Caco-2 (cell line): ENCODE measurements at regions of chr2 and their contacts with region 1.

Region 1: DNA sequence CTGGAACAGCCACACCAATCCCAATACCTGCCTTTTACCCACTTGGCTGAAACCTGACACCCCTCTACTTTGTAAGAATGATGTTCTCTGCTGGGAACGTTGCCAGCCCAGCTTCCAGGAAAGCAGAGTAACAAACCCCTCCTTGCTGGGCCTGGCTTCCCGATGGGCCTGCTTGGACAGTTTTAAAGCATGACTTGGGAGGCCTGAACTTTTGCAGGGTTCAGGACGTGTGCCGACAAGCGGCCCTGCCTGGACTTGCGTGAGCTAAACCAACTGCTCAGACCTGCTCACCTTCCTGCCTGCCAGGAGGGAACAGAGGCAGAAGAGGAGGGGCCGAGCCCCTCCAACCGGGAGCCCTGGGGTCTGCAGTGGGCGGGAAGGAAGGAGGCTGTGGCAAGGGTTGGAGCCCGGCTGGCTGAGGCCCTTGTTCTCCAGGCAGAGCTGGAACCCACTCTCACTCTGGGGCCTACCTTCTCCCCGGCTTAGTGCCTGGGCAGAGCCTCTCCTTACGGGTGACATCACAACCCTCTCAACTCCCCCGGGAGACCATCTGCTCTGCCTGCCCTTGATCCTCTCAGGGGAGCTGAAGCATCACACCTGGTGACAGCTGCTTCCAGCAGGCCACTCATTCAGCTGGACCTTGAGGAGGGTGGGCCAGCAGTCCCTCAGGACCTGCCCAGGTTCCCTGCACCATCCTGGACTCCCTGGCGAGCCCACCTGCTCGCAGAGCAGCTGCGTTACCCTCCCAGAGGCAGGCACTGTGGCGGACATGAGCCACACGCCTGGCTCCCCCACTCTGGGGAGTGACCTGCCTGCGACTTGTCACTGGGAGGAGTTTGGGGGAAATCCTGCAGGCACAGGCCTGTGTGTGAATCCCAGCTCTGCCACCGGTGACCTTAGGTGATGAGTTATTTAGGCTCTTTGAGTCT is 13.2 kb downstream of the HS6ST1 start:
- DNase-seq: no peak
- H3K4me3 ChIP-seq: no peak overlapping the region
- H3K4me3 Mint-ChIP-seq: no peak overlapping the region
- H3K27ac Mint-ChIP-seq: peak overlapping the region; percentile 36
- H3K4me1 ChIP-seq: peaks cover 13% of the 10 kb centered on the region
- H3K4me1 Mint-ChIP-seq: peaks cover 12% of the 10 kb centered on the region
- H3K27me3 ChIP-seq: no peaks in the 10 kb centered on the region
- H3K27me3 Mint-ChIP-seq: no peaks in the 10 kb centered on the region
- CTCF ChIP-seq: no peak

Region 2: DNA sequence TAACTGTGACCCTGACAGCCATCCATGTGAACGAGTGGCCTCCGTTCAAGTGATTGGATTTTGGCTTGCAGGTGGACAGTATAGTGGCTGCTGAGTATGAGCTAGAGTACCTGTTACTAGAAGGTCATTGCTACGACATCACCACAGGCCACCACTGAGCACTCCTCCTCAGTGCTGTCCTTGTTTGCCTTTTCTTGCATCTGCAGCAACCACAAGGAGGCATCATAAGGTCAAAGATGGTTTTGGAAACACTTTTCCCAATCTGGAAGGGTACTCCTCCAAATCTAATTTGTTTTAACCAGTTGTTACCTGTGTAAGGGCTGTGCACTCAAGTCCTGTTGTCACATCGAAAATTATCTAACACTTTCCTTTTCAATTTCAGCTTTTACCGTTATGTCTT is 133.2 kb before region 1 on chr2:
- CTCF ChIA-PET with region 1: interaction called, 3 read pairs
- POLR2A ChIA-PET with region 1: no interaction called
- intact Hi-C with region 1: loop called (anchors 5 kb)
- DNase-seq: peak in 1 of 2 experiments; percentile 20
- H3K4me3 ChIP-seq: no peak overlapping the region
- H3K4me3 Mint-ChIP-seq: no peak overlapping the region
- H3K27ac Mint-ChIP-seq: no peak overlapping the region
- H3K4me1 ChIP-seq: peaks cover 16% of the 10 kb centered on the region
- H3K4me1 Mint-ChIP-seq: peaks cover 14% of the 10 kb centered on the region
- H3K27me3 ChIP-seq: no peaks in the 10 kb centered on the region
- H3K27me3 Mint-ChIP-seq: no peaks in the 10 kb centered on the region
- CTCF ChIP-seq: peak; percentile 24 to 47

Region 3: DNA sequence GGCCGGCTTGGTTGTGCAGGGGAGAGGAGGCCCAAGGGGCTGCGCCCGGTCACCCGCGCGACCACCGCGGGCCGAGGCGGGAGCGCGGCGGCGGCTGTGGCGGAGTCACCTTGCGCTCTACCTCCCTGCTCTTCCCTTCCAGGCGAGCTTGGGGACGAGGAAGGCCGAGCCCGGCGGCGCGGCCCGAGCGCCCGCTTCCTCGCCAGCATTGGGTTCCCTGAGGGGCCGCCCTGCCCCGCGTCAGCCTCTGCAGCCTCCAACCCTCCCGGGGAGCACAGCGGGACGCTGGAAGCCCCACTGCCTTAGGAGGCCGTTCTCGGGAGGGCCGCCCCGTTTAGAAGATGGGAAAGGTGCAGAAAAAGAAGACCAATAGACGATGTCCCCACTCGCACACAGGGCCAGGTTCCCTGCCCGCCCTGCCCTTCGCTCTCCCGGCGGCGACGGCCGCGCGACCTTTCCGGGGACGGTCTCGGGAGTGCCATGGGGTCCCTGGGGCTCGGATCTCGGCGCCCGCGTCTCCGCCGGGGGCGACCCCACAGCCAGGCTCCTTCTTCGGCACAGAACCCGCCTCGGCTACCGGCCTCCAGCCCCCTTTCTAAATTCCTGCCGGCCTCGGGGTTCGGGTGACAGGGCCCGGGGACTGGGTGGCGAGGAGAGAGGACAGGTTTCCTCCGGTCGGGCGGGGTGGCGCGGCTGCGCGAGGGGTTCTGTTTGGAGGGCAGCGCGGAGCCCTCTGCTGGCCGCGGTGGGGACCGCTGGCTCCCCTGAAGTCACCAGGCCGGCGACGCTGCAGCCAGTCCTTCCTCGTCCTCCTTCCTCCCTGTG is 72.2 kb before region 1 on chr2:
- CTCF ChIA-PET with region 1: no interaction called
- POLR2A ChIA-PET with region 1: no interaction called
- intact Hi-C with region 1: no loop called
- DNase-seq: peak; percentile 88 to 93
- H3K4me3 ChIP-seq: peak overlapping the region; percentile 71
- H3K4me3 Mint-ChIP-seq: peak overlapping the region; percentile 73
- H3K27ac Mint-ChIP-seq: no peak overlapping the region
- H3K4me1 ChIP-seq: no peaks in the 10 kb centered on the region
- H3K4me1 Mint-ChIP-seq: no peaks in the 10 kb centered on the region
- H3K27me3 ChIP-seq: no peaks in the 10 kb centered on the region
- H3K27me3 Mint-ChIP-seq: no peaks in the 10 kb centered on the region
- CTCF ChIP-seq: peak; percentile 88 to 96

Region 4: DNA sequence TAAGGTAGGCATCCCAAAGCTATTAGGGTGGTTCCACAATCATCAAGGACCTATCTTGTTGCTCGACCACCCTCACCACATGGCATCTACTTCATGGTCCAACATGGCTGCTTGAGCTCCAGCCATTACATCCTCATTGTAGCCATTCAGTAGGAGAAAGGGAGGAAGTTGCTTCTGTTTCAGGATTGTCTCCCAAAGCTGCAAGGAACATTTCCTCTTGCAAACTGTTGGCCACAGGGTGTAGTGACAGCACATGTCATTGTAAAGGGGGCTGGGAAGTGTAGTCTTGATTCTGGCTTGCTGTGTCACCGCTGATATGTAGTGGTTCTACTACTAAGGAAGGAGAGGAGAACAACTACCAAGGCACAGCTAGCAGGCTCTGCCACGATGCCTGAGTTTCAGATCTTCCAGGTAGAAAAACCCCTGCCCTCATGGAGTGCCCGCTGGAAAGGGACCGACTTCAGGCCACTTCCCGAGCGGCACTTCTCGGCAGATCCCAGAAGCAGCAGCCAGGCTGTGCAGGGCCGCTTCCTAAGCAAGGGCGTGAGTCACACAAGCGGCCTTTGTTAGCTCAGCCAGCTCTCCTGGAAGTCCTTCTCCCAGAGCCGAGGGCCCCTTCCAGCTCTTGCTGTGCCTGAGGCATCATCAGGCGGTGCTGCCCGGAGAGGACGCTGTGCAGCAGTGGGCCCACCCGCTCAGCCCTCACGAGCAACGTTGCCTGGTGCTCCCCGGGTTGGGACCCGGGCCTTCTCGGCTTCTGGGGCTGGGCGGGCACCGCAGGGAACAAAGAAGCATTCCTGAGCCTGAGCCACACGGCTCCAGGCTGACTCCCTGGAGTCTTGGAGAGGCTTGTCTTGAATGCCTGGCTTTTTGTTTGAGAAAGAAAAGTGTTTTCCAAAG is 44.9 kb before region 1 on chr2:
- CTCF ChIA-PET with region 1: interaction called, 6 read pairs
- POLR2A ChIA-PET with region 1: no interaction called
- intact Hi-C with region 1: loop called (anchors 1 kb)
- DNase-seq: no peak
- H3K4me3 ChIP-seq: no peak overlapping the region
- H3K4me3 Mint-ChIP-seq: no peak overlapping the region
- H3K27ac Mint-ChIP-seq: no peak overlapping the region
- H3K4me1 ChIP-seq: peaks cover 4% of the 10 kb centered on the region; the same call in 1 of the 2 replicates
- H3K4me1 Mint-ChIP-seq: no peaks in the 10 kb centered on the region
- H3K27me3 ChIP-seq: no peaks in the 10 kb centered on the region
- H3K27me3 Mint-ChIP-seq: peaks cover 7% of the 10 kb centered on the region
- CTCF ChIP-seq: no peak

Region 5: GRCh38 chr2:128273469-128274081 is 31.8 kb before region 1 on chr2:
- CTCF ChIA-PET with region 1: no interaction called
- POLR2A ChIA-PET with region 1: no interaction called
- intact Hi-C with region 1: no loop called
- DNase-seq: peak in 1 of 2 experiments; percentile 16
- H3K4me3 ChIP-seq: no peak overlapping the region
- H3K4me3 Mint-ChIP-seq: no peak overlapping the region
- H3K27ac Mint-ChIP-seq: no peak overlapping the region
- H3K4me1 ChIP-seq: peaks cover 8% of the 10 kb centered on the region
- H3K4me1 Mint-ChIP-seq: no peaks in the 10 kb centered on the region
- H3K27me3 ChIP-seq: no peaks in the 10 kb centered on the region
- H3K27me3 Mint-ChIP-seq: no peaks in the 10 kb centered on the region
- CTCF ChIP-seq: no peak

Region 6: GRCh38 chr2:128292599-128293425 is 12.6 kb before region 1 on chr2:
- CTCF ChIA-PET with region 1: no interaction called
- POLR2A ChIA-PET with region 1: no interaction called
- intact Hi-C with region 1: no loop called
- DNase-seq: no peak
- H3K4me3 ChIP-seq: no peak overlapping the region
- H3K4me3 Mint-ChIP-seq: no peak overlapping the region
- H3K27ac Mint-ChIP-seq: no peak overlapping the region
- H3K4me1 ChIP-seq: no peaks in the 10 kb centered on the region
- H3K4me1 Mint-ChIP-seq: no peaks in the 10 kb centered on the region
- H3K27me3 ChIP-seq: no peaks in the 10 kb centered on the region
- H3K27me3 Mint-ChIP-seq: no peaks in the 10 kb centered on the region
- CTCF ChIP-seq: no peak

Region 7: GRCh38 chr2:128473175-128474035 is 168.0 kb after region 1 on chr2:
- CTCF ChIA-PET with region 1: no interaction called
- POLR2A ChIA-PET with region 1: no interaction called
- intact Hi-C with region 1: no loop called
- DNase-seq: no peak
- H3K4me3 ChIP-seq: no peak overlapping the region
- H3K4me3 Mint-ChIP-seq: no peak overlapping the region
- H3K27ac Mint-ChIP-seq: no peak overlapping the region
- H3K4me1 ChIP-seq: no peaks in the 10 kb centered on the region
- H3K4me1 Mint-ChIP-seq: no peaks in the 10 kb centered on the region
- H3K27me3 ChIP-seq: no peaks in the 10 kb centered on the region
- H3K27me3 Mint-ChIP-seq: no peaks in the 10 kb centered on the region
- CTCF ChIP-seq: no peak